Left lung (tissue), 14 donors: ENCODE measurements at regions of chr12 and their contacts with region 1.

Region 1: GRCh38 chr12:104381731-104382480 is 74.8 kb upstream of the CHST11 start:
- DNase-seq: peak; percentile 70 to 86 (median 82)
- ATAC-seq: peak; percentile 99
- H3K4me3 ChIP-seq: no peak overlapping the region
- H3K27ac ChIP-seq: no peak overlapping the region
- H3K4me1 ChIP-seq: peaks cover 5 to 10% of the 10 kb centered on the region in 2 donors
- H3K27me3 ChIP-seq: no peaks in the 10 kb centered on the region
- CTCF ChIP-seq: peak; percentile 89 to 96

Region 2: DNA sequence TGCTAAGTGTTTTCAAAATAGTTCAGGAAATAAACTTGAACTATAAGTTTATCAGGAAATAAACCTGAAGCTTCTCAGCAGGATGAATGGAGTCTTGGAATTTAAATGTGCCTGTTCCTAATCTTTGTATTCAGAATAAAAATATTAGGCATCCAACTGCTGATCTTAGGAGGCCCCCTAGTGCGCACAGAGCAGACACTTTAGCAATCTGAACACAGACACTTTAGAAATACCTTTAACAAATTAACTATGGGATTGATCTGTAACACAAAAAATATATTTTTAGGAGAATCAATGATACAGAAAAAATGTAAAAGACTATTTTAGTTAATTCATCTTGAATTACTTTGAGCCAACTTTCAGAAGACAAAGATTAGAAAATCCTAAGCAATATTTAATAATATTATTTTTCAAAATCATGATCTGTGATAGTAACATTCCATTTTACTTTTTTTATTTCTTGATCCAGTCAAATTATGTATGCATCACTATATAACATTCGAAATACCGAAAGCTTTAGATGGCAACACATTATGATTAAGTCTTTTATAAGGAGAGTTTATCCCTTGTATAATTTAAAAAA is 495.3 kb after region 1 on chr12:
- intact Hi-C with region 1: loop called in 1 of 2 experiments (anchors 10 kb)
- DNase-seq: peak in 1 of 4 donors; percentile 59
- ATAC-seq: peak; percentile 74
- H3K4me3 ChIP-seq: no peak overlapping the region
- H3K27ac ChIP-seq: no peak overlapping the region
- H3K4me1 ChIP-seq: no peaks in the 10 kb centered on the region
- H3K27me3 ChIP-seq: no peaks in the 10 kb centered on the region
- CTCF ChIP-seq: peak; percentile 31 to 55